ENCODE measurements at regions of chr6 and their contacts with region 1.

Region 1: DNA sequence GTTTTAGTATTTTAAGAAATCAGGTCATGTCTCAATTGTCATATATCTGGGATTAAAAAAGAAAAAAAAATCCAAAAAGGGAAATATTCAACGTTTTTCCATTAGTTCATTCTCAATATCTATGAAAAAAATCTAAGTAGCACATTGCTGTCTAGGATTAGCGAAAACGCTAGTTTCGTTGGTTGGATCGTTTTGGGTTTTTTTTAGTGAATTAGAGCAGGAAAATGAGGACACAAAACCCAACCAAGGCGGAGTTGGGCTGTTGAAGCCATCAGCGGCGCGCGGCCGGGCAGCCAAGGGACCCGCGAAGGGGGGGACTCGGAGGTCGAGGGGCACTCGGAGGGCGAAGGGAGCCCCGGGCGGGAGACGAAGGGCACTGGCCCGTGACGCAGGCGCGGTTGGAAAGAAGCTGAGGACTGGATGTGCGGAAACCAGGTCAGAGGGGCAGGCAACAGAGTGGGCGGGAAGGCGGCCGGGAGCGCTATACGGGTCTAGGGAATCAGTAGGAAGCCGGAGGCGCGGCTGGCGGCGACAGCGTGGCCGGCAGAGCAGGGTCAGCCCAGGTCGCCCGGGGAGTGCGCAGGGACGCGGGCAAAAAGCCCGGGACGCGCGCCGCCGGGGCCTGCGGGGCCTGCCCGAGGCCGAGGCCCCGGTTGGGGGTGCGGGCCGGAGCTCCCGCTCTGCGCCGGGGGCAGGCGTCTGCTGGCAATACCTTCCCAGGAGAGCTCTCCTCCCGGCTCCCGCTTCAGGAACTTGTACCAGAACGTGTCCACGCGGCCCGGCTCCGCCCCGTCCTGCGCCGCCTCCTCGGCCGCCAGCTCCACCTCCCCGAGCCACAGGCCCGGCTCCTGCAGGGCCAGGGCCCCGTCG is 599 bp downstream of the EPM2A start:
- DNase-seq: peak; percentile 77
- ATAC-seq: peak; percentile 72
- H3K4me3 Mint-ChIP-seq: peak overlapping the region; percentile 94
- H3K27ac Mint-ChIP-seq: peak overlapping the region; percentile 94
- H3K4me1 Mint-ChIP-seq: peaks cover 34% of the 10 kb centered on the region
- H3K27me3 Mint-ChIP-seq: no peaks in the 10 kb centered on the region
- CTCF ChIP-seq: no peak

Region 2: DNA sequence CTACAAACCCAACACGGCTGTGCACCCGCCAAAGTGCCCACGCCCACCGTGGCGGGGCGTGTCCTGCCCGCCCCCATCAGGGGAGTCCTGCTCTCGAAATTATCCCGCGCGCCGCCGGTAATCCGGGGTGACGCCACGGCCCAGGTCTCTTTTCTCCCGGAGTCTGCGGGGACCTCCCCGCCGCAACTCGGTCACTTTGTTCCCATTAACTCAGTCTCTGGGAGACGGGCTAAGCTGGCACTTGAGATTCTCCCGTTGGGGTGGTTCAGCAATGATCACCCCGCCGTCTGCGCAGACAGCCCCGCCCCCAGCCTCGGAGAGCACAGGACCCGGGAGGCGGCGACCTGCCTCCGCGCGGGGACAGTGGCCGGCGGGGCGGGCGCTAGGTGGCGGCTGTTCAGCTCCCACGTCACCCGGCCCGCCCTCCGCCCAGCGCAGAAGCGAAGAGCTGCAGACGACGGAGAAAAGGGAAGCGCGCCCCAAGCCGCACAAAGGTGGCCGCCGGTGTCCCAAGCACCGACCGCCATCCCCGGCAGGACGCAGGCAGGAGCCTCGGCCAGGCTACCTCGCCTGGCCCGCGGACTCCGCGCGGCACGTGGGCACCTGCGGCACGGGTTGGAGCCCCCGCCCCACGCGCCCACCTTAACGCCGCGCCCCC is 1670.8 kb before region 1 on chr6:
- CTCF ChIA-PET with region 1: no interaction called
- POLR2A ChIA-PET with region 1: no interaction called
- intact Hi-C with region 1: loop called (anchors 10 kb)
- DNase-seq: peak; percentile 91
- ATAC-seq: peak; percentile 93
- H3K4me3 Mint-ChIP-seq: peak overlapping the region; percentile 94
- H3K27ac Mint-ChIP-seq: peak overlapping the region; percentile 89
- H3K4me1 Mint-ChIP-seq: peaks cover 36% of the 10 kb centered on the region
- H3K27me3 Mint-ChIP-seq: no peaks in the 10 kb centered on the region
- CTCF ChIP-seq: no peak

Region 3: GRCh38 chr6:144653885-144654505 is 1080.7 kb before region 1 on chr6:
- CTCF ChIA-PET with region 1: no interaction called
- POLR2A ChIA-PET with region 1: interaction called, 7 read pairs
- intact Hi-C with region 1: loop called (anchors 5 kb)
- DNase-seq: no peak
- ATAC-seq: peak; percentile 93
- H3K4me3 Mint-ChIP-seq: peak overlapping the region; percentile 69
- H3K27ac Mint-ChIP-seq: peak overlapping the region; percentile 88
- H3K4me1 Mint-ChIP-seq: peaks cover 57% of the 10 kb centered on the region
- H3K27me3 Mint-ChIP-seq: no peaks in the 10 kb centered on the region
- CTCF ChIP-seq: no peak

Region 4: DNA sequence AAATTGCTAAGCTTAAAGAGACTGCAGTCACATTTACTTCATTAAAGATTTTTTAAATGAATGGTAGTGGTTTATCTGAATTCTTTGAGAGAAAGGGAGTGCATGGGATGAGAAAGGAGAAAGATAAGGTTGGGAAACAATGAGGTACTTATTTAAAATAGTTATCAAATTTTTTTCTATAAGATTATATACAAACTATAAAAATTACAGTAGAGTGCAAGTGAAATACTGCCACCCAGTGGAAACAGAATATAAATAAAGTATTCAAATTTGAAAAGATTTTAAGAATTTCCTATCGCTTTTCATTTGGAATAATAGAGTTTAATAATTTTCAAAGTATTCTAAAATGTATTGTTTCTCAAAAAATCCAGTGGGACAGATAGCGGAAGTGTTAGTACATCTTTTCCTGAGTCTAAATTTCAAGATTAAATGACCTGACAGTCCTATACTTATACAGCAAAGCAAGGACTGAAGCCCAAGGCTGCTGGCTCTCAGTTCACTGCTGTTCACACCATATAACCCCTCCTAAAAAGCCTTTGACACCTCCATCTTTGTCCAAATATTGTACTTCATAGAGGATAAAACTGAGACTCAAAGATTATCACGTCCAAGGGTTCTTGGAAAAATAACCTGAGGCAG is 30.5 kb before region 1 on chr6:
- CTCF ChIA-PET with region 1: no interaction called
- POLR2A ChIA-PET with region 1: no interaction called
- intact Hi-C with region 1: loop called (anchors 2 kb)
- DNase-seq: no peak
- ATAC-seq: no peak
- H3K4me3 Mint-ChIP-seq: no peak overlapping the region
- H3K27ac Mint-ChIP-seq: no peak overlapping the region
- H3K4me1 Mint-ChIP-seq: peaks cover 5% of the 10 kb centered on the region
- H3K27me3 Mint-ChIP-seq: no peaks in the 10 kb centered on the region
- CTCF ChIP-seq: no peak

Region 5: DNA sequence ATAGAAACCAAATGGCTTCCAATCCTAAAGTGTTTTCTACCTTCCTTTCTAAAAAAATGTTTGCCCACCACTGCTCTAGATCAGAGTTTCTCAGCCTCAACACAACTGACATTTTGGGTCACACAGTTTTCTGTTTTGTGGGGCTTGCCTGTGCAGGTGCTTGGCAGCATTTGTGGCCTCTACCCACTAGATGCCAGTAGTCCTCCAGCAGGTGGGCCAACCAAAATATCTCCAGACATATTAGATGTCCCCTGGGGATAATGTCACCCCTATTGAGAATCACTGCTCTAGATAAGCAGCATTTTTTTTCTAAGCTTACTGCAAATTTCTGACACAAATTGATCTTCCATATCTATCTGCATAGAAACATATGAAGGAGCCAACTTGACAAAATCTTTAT is 26.9 kb after region 1 on chr6:
- CTCF ChIA-PET with region 1: no interaction called
- POLR2A ChIA-PET with region 1: no interaction called
- intact Hi-C with region 1: no loop called
- DNase-seq: no peak
- ATAC-seq: no peak
- H3K4me3 Mint-ChIP-seq: no peak overlapping the region
- H3K27ac Mint-ChIP-seq: no peak overlapping the region
- H3K4me1 Mint-ChIP-seq: no peaks in the 10 kb centered on the region
- H3K27me3 Mint-ChIP-seq: no peaks in the 10 kb centered on the region
- CTCF ChIP-seq: no peak

Region 6: GRCh38 chr6:145814501-145815308 is 80.0 kb after region 1 on chr6 and contains the start of gene FBXO30:
- CTCF ChIA-PET with region 1: interaction called, 3 read pairs
- POLR2A ChIA-PET with region 1: interaction called, 75 read pairs
- intact Hi-C with region 1: loop called (anchors 1 kb)
- DNase-seq: peak; percentile 97
- ATAC-seq: peak; percentile 91
- H3K4me3 Mint-ChIP-seq: peak within 1 kb of the TSS; percentile 95
- H3K27ac Mint-ChIP-seq: peak within 1 kb of the TSS; percentile 92
- H3K4me1 Mint-ChIP-seq: peaks cover 33% of the 10 kb centered on the region
- H3K27me3 Mint-ChIP-seq: no peaks in the 10 kb centered on the region
- CTCF ChIP-seq: no peak
- total RNA-seq, gene FBXO30: 5.8 and 6.1 TPM in 2 replicates

Region 7: GRCh38 chr6:145829102-145829501 is 94.4 kb after region 1 on chr6:
- CTCF ChIA-PET with region 1: no interaction called
- POLR2A ChIA-PET with region 1: no interaction called
- intact Hi-C with region 1: no loop called
- DNase-seq: no peak
- ATAC-seq: no peak
- H3K4me3 Mint-ChIP-seq: no peak overlapping the region
- H3K27ac Mint-ChIP-seq: no peak overlapping the region
- H3K4me1 Mint-ChIP-seq: no peaks in the 10 kb centered on the region
- H3K27me3 Mint-ChIP-seq: no peaks in the 10 kb centered on the region
- CTCF ChIP-seq: no peak

Region 8: GRCh38 chr6:145887969-145888368 is 153.2 kb after region 1 on chr6:
- CTCF ChIA-PET with region 1: interaction called, 3 read pairs
- POLR2A ChIA-PET with region 1: no interaction called
- intact Hi-C with region 1: loop called (anchors 5 kb)
- DNase-seq: no peak
- ATAC-seq: no peak
- H3K4me3 Mint-ChIP-seq: no peak overlapping the region
- H3K27ac Mint-ChIP-seq: no peak overlapping the region
- H3K4me1 Mint-ChIP-seq: no peaks in the 10 kb centered on the region
- H3K27me3 Mint-ChIP-seq: no peaks in the 10 kb centered on the region
- CTCF ChIP-seq: no peak

Region 9: GRCh38 chr6:145963216-145964068 is 228.7 kb after region 1 on chr6:
- CTCF ChIA-PET with region 1: no interaction called
- POLR2A ChIA-PET with region 1: interaction called, 45 read pairs
- intact Hi-C with region 1: loop called (anchors 1 kb)
- DNase-seq: peak; percentile 44
- ATAC-seq: peak; percentile 4
- H3K4me3 Mint-ChIP-seq: peak overlapping the region; percentile 99
- H3K27ac Mint-ChIP-seq: peak overlapping the region; percentile 96
- H3K4me1 Mint-ChIP-seq: peaks cover 45% of the 10 kb centered on the region
- H3K27me3 Mint-ChIP-seq: no peaks in the 10 kb centered on the region
- CTCF ChIP-seq: no peak

Region 10: DNA sequence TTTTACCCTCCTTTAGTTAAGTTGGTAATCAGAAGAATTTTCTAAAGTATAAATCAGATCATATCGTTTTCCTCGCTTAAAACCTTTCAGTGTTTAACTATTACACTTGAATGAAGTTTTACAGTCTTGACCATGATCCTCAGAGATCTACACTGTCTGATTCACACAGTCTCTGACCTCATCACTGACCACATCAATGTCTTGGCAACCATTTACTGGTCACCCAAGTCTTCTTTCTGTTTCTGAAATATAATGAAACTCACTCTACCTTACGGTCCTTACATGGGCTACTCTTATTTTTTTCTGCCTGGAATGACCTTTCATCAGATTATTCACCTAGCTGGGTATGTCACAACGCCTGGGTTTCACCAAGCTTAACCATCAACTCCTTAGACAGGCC is 935.4 kb after region 1 on chr6:
- CTCF ChIA-PET with region 1: no interaction called
- POLR2A ChIA-PET with region 1: no interaction called
- intact Hi-C with region 1: no loop called
- DNase-seq: no peak
- ATAC-seq: no peak
- H3K4me3 Mint-ChIP-seq: no peak overlapping the region
- H3K27ac Mint-ChIP-seq: no peak overlapping the region
- H3K4me1 Mint-ChIP-seq: no peaks in the 10 kb centered on the region
- H3K27me3 Mint-ChIP-seq: peaks cover 3% of the 10 kb centered on the region
- CTCF ChIP-seq: no peak